PC-9 (cell line): ENCODE measurements at regions of chr6 and their contacts with region 1.

Region 1: GRCh38 chr6:90179190-90180169 is 117.2 kb downstream of the BACH2 start:
- DNase-seq: no peak
- H3K4me3 ChIP-seq: no peak overlapping the region
- H3K27ac ChIP-seq: no peak overlapping the region
- H3K4me1 ChIP-seq: no peaks in the 10 kb centered on the region
- H3K27me3 ChIP-seq: no peaks in the 10 kb centered on the region
- CTCF ChIP-seq: peak; percentile 64

Region 2: DNA sequence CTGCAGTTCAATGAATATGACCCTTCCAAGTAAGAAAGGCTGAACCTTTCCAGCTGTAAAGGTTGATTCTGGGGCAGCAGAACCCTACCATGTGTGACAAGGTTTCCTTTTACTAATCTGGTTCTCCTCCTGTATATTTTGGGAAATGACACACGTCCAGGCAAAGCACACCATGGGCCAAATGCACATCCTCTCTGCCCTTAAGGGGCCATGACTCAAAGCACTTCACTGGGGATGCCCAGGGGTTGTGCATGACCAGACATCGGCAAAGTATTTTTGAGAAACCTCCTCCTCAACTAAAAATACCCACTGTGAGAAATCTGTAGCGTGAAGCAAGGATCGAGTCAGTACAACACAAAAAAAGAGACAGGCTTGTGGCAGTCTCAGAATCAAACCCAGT is 57.5 kb before region 1 on chr6:
- CTCF ChIA-PET with region 1: no interaction called
- POLR2A ChIA-PET with region 1: no interaction called
- intact Hi-C with region 1: no loop called
- DNase-seq: no peak
- H3K4me3 ChIP-seq: no peak overlapping the region
- H3K27ac ChIP-seq: no peak overlapping the region
- H3K4me1 ChIP-seq: no peaks in the 10 kb centered on the region
- H3K27me3 ChIP-seq: no peaks in the 10 kb centered on the region
- CTCF ChIP-seq: no peak

Region 3: GRCh38 chr6:90296346-90297114 is 117.0 kb after region 1 on chr6 and contains the start of gene BACH2:
- CTCF ChIA-PET with region 1: no interaction called
- POLR2A ChIA-PET with region 1: no interaction called
- intact Hi-C with region 1: loop called (anchors 5 kb)
- DNase-seq: peak; percentile 57 to 78
- H3K4me3 ChIP-seq: peak within 1 kb of the TSS; percentile 57
- H3K27ac ChIP-seq: no peak within 1 kb of the TSS
- H3K4me1 ChIP-seq: peaks cover 9% of the 10 kb centered on the region; the same call in 1 of the 2 replicates
- H3K27me3 ChIP-seq: 0 out of 2 replicates have a peak, but pooled peaks cover 5% of the 10 kb centered on the region
- CTCF ChIP-seq: no peak
- total RNA-seq, gene BACH2: 2.3 and 4.2 TPM in 2 replicates